ENCODE measurements at regions of chr1 and their contacts with region 1.

Region 1: GRCh38 chr1:23790696-23791515 is at the start of gene LYPLA2:
- DNase-seq: no peak
- H3K4me3 ChIP-seq: peak within 1 kb of the TSS; percentile 90
- CTCF ChIP-seq: no peak

Region 2: GRCh38 chr1:23777979-23778814 is 12.7 kb before region 1 on chr1 and contains the start of gene PITHD1:
- CTCF ChIA-PET with region 1: interaction called, 10 read pairs
- POLR2A ChIA-PET with region 1: interaction called, 6 read pairs
- DNase-seq: no peak
- H3K4me3 ChIP-seq: peak within 1 kb of the TSS; percentile 81
- CTCF ChIP-seq: no peak